SK-N-SH (cell line): ENCODE measurements at regions of chr16 and their contacts with region 1.

Region 1: GRCh38 chr16:49876716-49877129 is 20.8 kb upstream of the ZNF423 start:
- DNase-seq: peak; percentile 92
- H3K4me3 ChIP-seq: peak overlapping the region in 1 of 2 experiments; percentile 51; a peak in 1 of 4 replicates
- H3K27ac ChIP-seq: no peak overlapping the region
- H3K4me1 ChIP-seq: no peaks in the 10 kb centered on the region
- H3K27me3 ChIP-seq: no peaks in the 10 kb centered on the region; the same call in none of the 2 replicates
- CTCF ChIP-seq: peak; percentile 64
- EP300 ChIP-seq: no peak
- RAD21 ChIP-seq: peak; percentile 43

Region 2: DNA sequence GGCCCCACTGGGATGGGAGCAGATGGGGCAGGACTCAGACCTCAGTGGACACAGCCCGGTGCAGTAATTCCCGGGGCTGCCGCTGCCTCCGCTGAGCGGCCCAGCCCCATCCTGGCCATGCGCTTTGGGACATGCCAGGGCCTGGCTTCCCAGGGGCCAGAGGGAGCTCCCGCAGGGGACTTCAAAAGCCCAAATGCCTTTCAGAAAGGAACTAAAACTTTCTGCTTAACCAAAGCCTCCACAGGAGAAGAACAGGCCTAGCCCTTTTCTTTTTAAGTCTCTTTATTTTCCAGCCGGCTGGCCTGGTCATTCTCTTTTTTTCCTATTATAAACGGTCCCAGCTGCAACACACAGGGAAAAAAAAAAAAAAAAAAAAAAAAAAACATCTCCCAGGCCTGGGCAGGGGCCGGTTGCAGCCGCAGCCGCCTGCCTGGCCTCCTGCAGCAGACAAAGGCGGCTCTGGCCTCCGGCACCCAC is 10.1 kb before region 1 on chr16:
- CTCF ChIA-PET with region 1: interaction called, 41 read pairs
- POLR2A ChIA-PET with region 1: no interaction called
- DNase-seq: peak; percentile 90
- H3K4me3 ChIP-seq: no peak overlapping the region
- H3K27ac ChIP-seq: peak overlapping the region in 1 of 2 experiments; percentile 93; a peak in 2 of 4 replicates
- H3K4me1 ChIP-seq: peaks cover 0 to 18% of the 10 kb centered on the region in 2 experiments; a peak in 1 of 4 replicates
- H3K27me3 ChIP-seq: peaks cover 12% of the 10 kb centered on the region; the same call in 1 of the 2 replicates
- CTCF ChIP-seq: no peak
- EP300 ChIP-seq: no peak
- RAD21 ChIP-seq: peak; percentile 17; the same call in 1 of the 2 replicates

Region 3: GRCh38 chr16:49890876-49891275 is 14.2 kb after region 1 on chr16:
- CTCF ChIA-PET with region 1: interaction called, 52 read pairs
- POLR2A ChIA-PET with region 1: no interaction called
- DNase-seq: no peak
- H3K4me3 ChIP-seq: no peak overlapping the region
- H3K27ac ChIP-seq: no peak overlapping the region
- H3K4me1 ChIP-seq: no peaks in the 10 kb centered on the region
- H3K27me3 ChIP-seq: no peaks in the 10 kb centered on the region
- CTCF ChIP-seq: no peak
- EP300 ChIP-seq: no peak
- RAD21 ChIP-seq: peak; percentile 33

Region 4: GRCh38 chr16:50038756-50039529 is 162.2 kb after region 1 on chr16:
- CTCF ChIA-PET with region 1: no interaction called
- POLR2A ChIA-PET with region 1: no interaction called
- DNase-seq: no peak
- H3K4me3 ChIP-seq: no peak overlapping the region
- H3K27ac ChIP-seq: no peak overlapping the region
- H3K4me1 ChIP-seq: peaks cover 2 to 14% of the 10 kb centered on the region in 2 experiments; a peak in 2 of 4 replicates
- H3K27me3 ChIP-seq: no peaks in the 10 kb centered on the region
- CTCF ChIP-seq: no peak
- EP300 ChIP-seq: no peak
- RAD21 ChIP-seq: no peak